PC-3 (cell line): ENCODE measurements at regions of chr18 and their contacts with region 1.

Region 1: DNA sequence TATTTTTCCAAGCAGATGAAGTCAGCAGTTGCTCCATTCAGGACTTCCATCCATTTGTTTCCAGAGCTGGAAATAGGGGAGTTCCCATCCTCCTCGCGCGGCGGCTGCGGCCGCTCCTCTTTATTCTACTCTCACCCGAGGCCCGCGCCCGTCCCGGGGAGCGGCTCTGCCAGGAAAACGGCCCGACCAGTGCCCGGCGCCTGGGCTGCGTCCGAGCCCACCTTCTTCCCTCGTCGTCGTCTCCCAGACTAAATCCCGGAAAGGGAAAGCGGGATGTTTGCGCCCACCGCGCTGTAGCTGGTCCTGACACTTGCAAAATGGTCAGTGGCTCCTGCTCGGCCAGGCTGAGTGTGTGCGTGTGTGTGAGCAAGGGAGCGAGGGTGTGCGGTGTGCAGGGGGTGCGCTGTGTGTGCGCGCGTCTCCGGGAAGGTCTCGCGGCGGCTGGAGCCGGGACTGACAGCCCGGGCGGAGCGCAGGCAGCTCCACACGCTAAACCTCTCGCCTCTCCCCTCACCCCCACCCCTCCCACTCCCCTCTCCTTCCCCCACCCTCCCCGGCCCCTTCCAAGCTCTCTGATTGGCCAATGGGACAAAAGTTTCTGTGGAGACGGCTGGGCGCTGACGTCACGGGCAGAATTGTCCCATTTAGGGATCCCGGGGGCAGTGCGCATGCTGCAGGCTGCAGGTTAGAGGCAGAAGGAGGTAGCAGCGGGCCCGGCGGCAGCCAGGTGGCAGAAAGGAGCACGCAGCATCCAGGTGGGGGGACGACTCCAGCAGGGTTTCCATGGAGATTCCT is at the start of gene NOL4:
- DNase-seq: peak; percentile 36
- ATAC-seq: peak; percentile 64
- H3K4me3 ChIP-seq: peak within 1 kb of the TSS; percentile 66
- H3K27ac ChIP-seq: no peak within 1 kb of the TSS
- H3K4me1 ChIP-seq: peaks cover 3% of the 10 kb centered on the region; the same call in 1 of the 2 replicates
- H3K27me3 ChIP-seq: peaks cover 46% of the 10 kb centered on the region
- CTCF ChIP-seq: peak; percentile 48
- total RNA-seq, gene NOL4: not detected in 2 replicates

Region 2: GRCh38 chr18:34322365-34323289 is 98.0 kb after region 1 on chr18:
- CTCF ChIA-PET with region 1: no interaction called
- POLR2A ChIA-PET with region 1: no interaction called
- intact Hi-C with region 1: loop called (anchors 5 kb)
- DNase-seq: peak; percentile 41
- ATAC-seq: no peak
- H3K4me3 ChIP-seq: no peak overlapping the region
- H3K27ac ChIP-seq: no peak overlapping the region
- H3K4me1 ChIP-seq: no peaks in the 10 kb centered on the region
- H3K27me3 ChIP-seq: no peaks in the 10 kb centered on the region
- CTCF ChIP-seq: peak; percentile 58